ENCODE measurements at regions of chr17 and their contacts with region 1.

Region 1: DNA sequence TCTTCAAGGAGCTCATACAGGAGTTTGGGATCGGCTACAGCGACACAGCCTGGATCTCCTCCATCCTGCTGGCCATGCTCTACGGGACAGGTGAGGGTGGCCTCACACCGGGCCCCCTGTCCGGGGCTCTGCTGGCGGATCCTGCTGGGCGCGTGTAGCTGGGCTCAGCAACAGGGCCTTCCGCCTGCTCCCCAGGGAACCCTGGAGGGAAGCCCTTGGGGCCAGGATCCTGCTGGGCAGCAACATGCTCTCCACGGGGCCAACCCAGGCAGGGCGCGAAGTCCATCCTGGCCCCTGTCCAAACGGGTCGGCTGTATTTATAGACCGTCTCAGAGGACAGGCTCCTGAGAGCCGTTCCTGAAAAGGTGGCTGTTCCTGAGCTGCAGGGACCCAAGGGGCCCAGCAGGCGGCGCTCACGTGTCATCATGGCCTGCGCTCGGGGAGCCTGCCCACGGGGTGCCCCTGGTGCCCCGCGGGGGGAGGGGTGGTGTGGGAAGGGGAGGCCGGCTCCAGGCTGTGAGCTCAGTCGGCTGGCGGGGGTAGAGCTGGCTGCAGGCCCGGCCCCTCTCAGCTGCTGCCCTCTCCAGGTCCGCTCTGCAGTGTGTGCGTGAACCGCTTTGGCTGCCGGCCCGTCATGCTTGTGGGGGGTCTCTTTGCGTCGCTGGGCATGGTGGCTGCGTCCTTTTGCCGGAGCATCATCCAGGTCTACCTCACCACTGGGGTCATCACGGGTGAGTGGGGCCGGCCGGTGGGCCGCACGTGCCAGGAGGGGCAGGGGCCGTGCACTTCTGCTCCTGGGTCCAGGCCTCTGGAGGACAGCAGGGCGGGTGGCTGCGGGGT is 7.5 kb downstream of the SLC16A3 start:
- DNase-seq: peak; percentile 73
- ATAC-seq: peak; percentile 15
- H3K4me3 Mint-ChIP-seq: no peak overlapping the region
- H3K27ac Mint-ChIP-seq: peak overlapping the region; percentile 52
- H3K4me1 Mint-ChIP-seq: peaks cover 69% of the 10 kb centered on the region
- H3K27me3 Mint-ChIP-seq: no peaks in the 10 kb centered on the region

Region 2: GRCh38 chr17:82030470-82031302 is 205.7 kb before region 1 on chr17:
- CTCF ChIA-PET with region 1: interaction called, 15 read pairs
- POLR2A ChIA-PET with region 1: interaction called, 3 read pairs
- DNase-seq: peak; percentile 88
- ATAC-seq: peak; percentile 73
- H3K4me3 Mint-ChIP-seq: peak overlapping the region; percentile 76
- H3K27ac Mint-ChIP-seq: peak overlapping the region; percentile 52
- H3K4me1 Mint-ChIP-seq: peaks cover 41% of the 10 kb centered on the region
- H3K27me3 Mint-ChIP-seq: no peaks in the 10 kb centered on the region

Region 3: GRCh38 chr17:82056729-82057621 is 179.4 kb before region 1 on chr17:
- CTCF ChIA-PET with region 1: no interaction called
- POLR2A ChIA-PET with region 1: no interaction called
- DNase-seq: no peak
- ATAC-seq: no peak
- H3K4me3 Mint-ChIP-seq: no peak overlapping the region
- H3K27ac Mint-ChIP-seq: no peak overlapping the region
- H3K4me1 Mint-ChIP-seq: peaks cover 15% of the 10 kb centered on the region
- H3K27me3 Mint-ChIP-seq: no peaks in the 10 kb centered on the region

Region 4: GRCh38 chr17:82170412-82170961 is 65.9 kb before region 1 on chr17:
- CTCF ChIA-PET with region 1: no interaction called
- POLR2A ChIA-PET with region 1: no interaction called
- DNase-seq: no peak
- ATAC-seq: no peak
- H3K4me3 Mint-ChIP-seq: no peak overlapping the region
- H3K27ac Mint-ChIP-seq: no peak overlapping the region
- H3K4me1 Mint-ChIP-seq: peaks cover 8% of the 10 kb centered on the region
- H3K27me3 Mint-ChIP-seq: no peaks in the 10 kb centered on the region

Region 5: DNA sequence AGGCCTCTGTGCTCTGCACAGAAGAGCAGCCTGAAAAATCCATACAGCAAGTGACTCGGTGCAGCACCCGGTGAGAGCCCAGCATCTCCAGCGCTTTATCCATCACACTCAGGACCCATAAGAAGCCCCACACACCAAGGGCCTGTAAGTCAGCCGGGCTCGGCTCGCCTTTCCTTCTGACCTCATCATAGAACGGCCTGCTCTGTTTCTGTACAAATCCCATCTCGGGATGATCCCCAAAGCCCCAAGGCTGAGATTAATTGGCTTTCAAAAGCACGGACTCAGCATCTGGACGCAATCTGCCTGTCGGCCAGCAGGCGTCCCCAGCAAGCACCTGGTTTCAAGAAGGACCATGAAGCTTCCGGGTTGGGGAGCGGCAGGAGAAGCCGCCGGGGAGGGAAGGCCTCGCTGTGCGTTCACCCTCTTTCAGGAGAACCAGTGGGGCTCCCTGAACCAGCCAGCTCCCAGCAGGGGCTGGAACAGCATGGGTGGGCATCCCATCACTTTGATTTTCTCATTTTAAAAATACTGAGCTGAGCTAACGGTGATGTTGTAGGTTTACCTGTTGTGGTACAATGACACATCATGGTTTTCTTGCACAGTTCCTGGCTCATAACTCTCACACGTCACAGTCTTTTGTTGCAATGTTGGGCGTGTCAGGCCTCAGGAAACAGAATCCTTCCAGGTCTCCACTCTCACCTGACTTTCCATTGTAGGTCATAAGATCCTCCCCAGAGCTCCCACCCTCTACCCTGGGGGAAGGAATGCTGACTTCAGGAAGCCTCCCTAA is 30.4 kb before region 1 on chr17:
- CTCF ChIA-PET with region 1: interaction called, 22 read pairs
- POLR2A ChIA-PET with region 1: interaction called, 4 read pairs
- DNase-seq: peak; percentile 90
- ATAC-seq: peak; percentile 76
- H3K4me3 Mint-ChIP-seq: peak overlapping the region; percentile 62
- H3K27ac Mint-ChIP-seq: peak overlapping the region; percentile 96
- H3K4me1 Mint-ChIP-seq: peaks cover 67% of the 10 kb centered on the region
- H3K27me3 Mint-ChIP-seq: no peaks in the 10 kb centered on the region

Region 6: GRCh38 chr17:82283208-82283749 is 46.9 kb after region 1 on chr17:
- CTCF ChIA-PET with region 1: no interaction called
- POLR2A ChIA-PET with region 1: no interaction called
- DNase-seq: no peak
- ATAC-seq: no peak
- H3K4me3 Mint-ChIP-seq: no peak overlapping the region
- H3K27ac Mint-ChIP-seq: no peak overlapping the region
- H3K4me1 Mint-ChIP-seq: peaks cover 35% of the 10 kb centered on the region
- H3K27me3 Mint-ChIP-seq: peaks cover 5% of the 10 kb centered on the region

Region 7: GRCh38 chr17:82297714-82298537 is 61.6 kb after region 1 on chr17:
- CTCF ChIA-PET with region 1: interaction called, 17 read pairs
- POLR2A ChIA-PET with region 1: interaction called, 7 read pairs
- DNase-seq: peak; percentile 96
- ATAC-seq: peak; percentile 66
- H3K4me3 Mint-ChIP-seq: peak overlapping the region; percentile 88
- H3K27ac Mint-ChIP-seq: peak overlapping the region; percentile 100
- H3K4me1 Mint-ChIP-seq: peaks cover 87% of the 10 kb centered on the region
- H3K27me3 Mint-ChIP-seq: no peaks in the 10 kb centered on the region

Region 8: GRCh38 chr17:82315703-82316358 is 79.5 kb after region 1 on chr17:
- CTCF ChIA-PET with region 1: interaction called, 30 read pairs
- POLR2A ChIA-PET with region 1: no interaction called
- DNase-seq: peak; percentile 70
- ATAC-seq: peak; percentile 37
- H3K4me3 Mint-ChIP-seq: peak overlapping the region; percentile 96
- H3K27ac Mint-ChIP-seq: peak overlapping the region; percentile 91
- H3K4me1 Mint-ChIP-seq: peaks cover 27% of the 10 kb centered on the region
- H3K27me3 Mint-ChIP-seq: no peaks in the 10 kb centered on the region

Region 9: GRCh38 chr17:82320956-82321927 is 84.9 kb after region 1 on chr17:
- CTCF ChIA-PET with region 1: interaction called, 30 read pairs
- POLR2A ChIA-PET with region 1: no interaction called
- DNase-seq: peak; percentile 68
- ATAC-seq: peak; percentile 31
- H3K4me3 Mint-ChIP-seq: peak overlapping the region; percentile 64
- H3K27ac Mint-ChIP-seq: peak overlapping the region; percentile 77
- H3K4me1 Mint-ChIP-seq: peaks cover 28% of the 10 kb centered on the region
- H3K27me3 Mint-ChIP-seq: no peaks in the 10 kb centered on the region

Region 10: DNA sequence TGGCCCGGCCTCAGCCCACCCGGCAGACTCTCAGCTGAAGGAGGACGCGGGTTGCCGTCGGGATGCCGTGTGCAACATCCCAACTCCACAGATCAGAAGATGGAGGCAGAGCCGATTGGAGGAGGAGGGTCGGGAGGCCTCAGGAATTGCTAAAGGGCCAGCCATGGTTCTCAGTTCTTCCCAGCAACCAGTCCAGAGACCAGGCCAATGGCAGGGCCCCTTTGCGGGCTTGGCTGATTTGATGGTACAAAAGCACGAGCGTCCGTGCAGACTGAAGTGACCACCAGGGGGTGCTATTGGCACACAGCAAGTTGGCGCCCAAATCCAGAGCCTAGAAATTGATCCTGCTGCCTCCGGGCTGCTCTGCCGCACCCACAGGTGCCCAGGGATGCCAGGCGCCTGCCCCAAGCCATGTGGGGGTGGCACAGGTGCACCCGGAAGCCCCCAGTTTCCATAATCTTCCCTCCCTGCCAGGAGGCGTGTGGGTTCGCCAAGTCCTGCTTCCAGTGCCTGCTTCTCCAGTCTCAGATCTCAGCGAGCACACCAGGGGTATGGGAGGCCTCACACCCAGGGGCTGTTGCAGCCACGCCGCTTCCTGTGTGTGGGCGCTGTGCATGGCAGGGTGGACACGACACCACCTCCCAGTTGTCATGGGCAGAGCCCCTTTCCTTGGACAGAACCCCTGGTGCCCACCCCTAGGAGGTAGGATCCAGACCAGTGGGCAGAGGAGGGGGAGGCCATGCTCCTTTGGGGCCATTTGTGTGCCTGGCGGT is 115.5 kb after region 1 on chr17:
- CTCF ChIA-PET with region 1: interaction called, 12 read pairs
- POLR2A ChIA-PET with region 1: no interaction called
- DNase-seq: peak; percentile 90
- ATAC-seq: peak; percentile 87
- H3K4me3 Mint-ChIP-seq: no peak overlapping the region
- H3K27ac Mint-ChIP-seq: no peak overlapping the region
- H3K4me1 Mint-ChIP-seq: peaks cover 2% of the 10 kb centered on the region
- H3K27me3 Mint-ChIP-seq: peaks cover 8% of the 10 kb centered on the region